ENCODE measurements at regions of chr2 and their contacts with region 1.

Region 1: GRCh38 chr2:176126929-176127773 is 2.4 kb upstream of the HOXD8 start:
- DNase-seq: peak; percentile 72 to 86 (median 76)
- H3K4me3 ChIP-seq: no peak overlapping the region
- H3K27ac ChIP-seq: no peak overlapping the region
- H3K4me1 ChIP-seq: peaks cover 3 to 25% (median 18%) of the 10 kb centered on the region in 4 experiments
- H3K27me3 ChIP-seq: peaks cover 22 to 99% (median 64%) of the 10 kb centered on the region in 5 experiments

Region 2: DNA sequence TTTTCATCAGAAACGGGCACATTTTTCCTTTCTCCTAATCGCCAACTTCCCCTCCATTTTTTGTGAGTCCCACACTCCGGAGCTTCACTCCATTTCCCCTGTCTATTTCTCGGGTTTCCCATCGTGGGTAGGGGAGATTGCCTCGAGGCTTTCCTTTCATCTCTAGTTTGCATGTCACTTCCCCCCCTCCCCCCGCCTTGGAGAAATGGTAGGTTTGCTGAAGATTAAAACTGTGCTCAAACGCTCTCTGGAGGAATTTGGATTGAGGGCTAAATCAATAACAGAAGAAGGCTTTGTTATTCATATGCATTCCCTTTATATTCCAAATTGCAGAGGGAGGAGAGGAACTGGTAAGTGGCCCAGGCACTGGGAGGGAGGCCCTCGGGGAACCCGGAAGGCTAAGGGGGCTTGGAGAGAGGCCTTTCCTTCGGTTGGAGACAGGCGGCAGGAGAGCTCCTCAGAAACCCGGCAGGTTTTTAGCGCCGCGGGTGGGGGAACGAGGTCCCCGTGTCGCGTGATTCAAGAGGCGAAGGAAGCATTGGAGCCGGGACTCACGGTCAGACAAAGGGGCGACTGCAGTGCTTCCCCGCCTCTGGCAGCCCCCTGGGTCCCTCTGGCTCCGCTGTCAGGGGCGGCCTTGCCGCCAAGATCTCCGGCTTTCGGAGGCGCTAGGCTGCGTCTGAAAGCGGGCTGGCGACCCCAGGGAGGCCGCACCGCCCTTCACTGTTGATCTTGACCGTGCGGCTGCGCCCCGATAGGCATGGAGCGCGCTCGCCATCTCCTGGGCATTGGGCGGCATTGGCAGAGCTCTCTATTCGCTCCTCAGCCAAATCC is 29.9 kb before region 1 on chr2:
- CTCF ChIA-PET with region 1: interaction called, 11 read pairs
- POLR2A ChIA-PET with region 1: no interaction called
- DNase-seq: peak; percentile 65 to 74 (median 71)
- H3K4me3 ChIP-seq: peak overlapping the region in 6 of 7 experiments; percentile 27 to 57 (median 52)
- H3K27ac ChIP-seq: no peak overlapping the region
- H3K4me1 ChIP-seq: peaks cover 7 to 23% (median 19%) of the 10 kb centered on the region in 4 experiments
- H3K27me3 ChIP-seq: peaks cover 34 to 99% (median 78%) of the 10 kb centered on the region in 5 experiments

Region 3: GRCh38 chr2:176110975-176111663 is 16.0 kb before region 1 on chr2:
- CTCF ChIA-PET with region 1: interaction called, 24 read pairs
- POLR2A ChIA-PET with region 1: no interaction called
- DNase-seq: peak; percentile 62 to 66 (median 65)
- H3K4me3 ChIP-seq: no peak overlapping the region
- H3K27ac ChIP-seq: no peak overlapping the region
- H3K4me1 ChIP-seq: peaks cover 0 to 10% (median 6%) of the 10 kb centered on the region in 4 experiments
- H3K27me3 ChIP-seq: peaks cover 29 to 99% (median 70%) of the 10 kb centered on the region in 5 experiments

Region 4: GRCh38 chr2:176638167-176639015 is 511.2 kb after region 1 on chr2:
- CTCF ChIA-PET with region 1: interaction called, 24 read pairs
- POLR2A ChIA-PET with region 1: no interaction called
- DNase-seq: peak; percentile 63 to 75 (median 75)
- H3K4me3 ChIP-seq: peak overlapping the region in 6 of 7 experiments; percentile 15 to 68 (median 58)
- H3K27ac ChIP-seq: no peak overlapping the region
- H3K4me1 ChIP-seq: peaks cover 0 to 12% (median 9%) of the 10 kb centered on the region in 4 experiments
- H3K27me3 ChIP-seq: peaks cover 38 to 92% (median 52%) of the 10 kb centered on the region in 5 experiments

Region 5: GRCh38 chr2:176643646-176644045 is 516.5 kb after region 1 on chr2:
- CTCF ChIA-PET with region 1: interaction called, 24 read pairs
- POLR2A ChIA-PET with region 1: no interaction called
- DNase-seq: no peak
- H3K4me3 ChIP-seq: no peak overlapping the region
- H3K27ac ChIP-seq: no peak overlapping the region
- H3K4me1 ChIP-seq: peaks cover 0 to 5% (median 2%) of the 10 kb centered on the region in 4 experiments
- H3K27me3 ChIP-seq: peaks cover 34 to 95% (median 58%) of the 10 kb centered on the region in 5 experiments

Region 6: GRCh38 chr2:176653479-176654443 is 526.6 kb after region 1 on chr2:
- CTCF ChIA-PET with region 1: interaction called, 44 read pairs
- POLR2A ChIA-PET with region 1: no interaction called
- DNase-seq: peak; percentile 58 to 74 (median 71)
- H3K4me3 ChIP-seq: no peak overlapping the region
- H3K27ac ChIP-seq: no peak overlapping the region
- H3K4me1 ChIP-seq: peaks cover 0 to 2% (median 0%) of the 10 kb centered on the region in 4 experiments
- H3K27me3 ChIP-seq: peaks cover 7 to 58% (median 22%) of the 10 kb centered on the region in 5 experiments

Region 7: DNA sequence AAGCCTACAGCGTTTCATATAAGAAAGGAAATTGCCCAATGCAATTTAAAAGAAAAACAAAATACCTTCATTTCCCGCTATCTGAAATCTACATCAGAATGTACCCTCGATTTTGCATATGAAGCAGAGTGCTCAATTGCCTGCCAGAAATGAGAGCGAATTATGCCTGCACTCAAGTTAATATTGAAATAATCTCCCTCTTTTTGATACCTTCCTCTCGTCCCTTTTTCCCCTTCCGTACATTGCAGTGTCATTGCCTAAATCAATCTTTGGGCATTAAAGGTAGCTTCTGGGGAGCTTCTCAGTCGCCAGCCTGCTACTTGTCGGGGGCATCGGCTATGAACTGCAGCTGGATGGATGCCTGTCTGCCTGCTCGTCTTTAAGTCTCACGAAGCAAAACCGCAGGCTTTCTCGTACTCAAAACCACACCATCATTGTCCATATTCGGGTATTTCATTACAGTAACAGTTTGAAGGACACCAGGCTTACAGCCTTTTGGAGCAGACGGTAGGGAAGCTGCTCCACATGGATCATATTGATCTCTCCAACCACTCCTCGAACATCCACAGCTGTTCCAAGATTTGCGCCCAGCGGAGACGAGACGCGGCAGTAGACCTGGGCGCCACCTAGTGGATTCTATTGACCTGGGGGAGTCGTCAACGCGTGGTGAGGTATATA is 1021.5 kb after region 1 on chr2:
- CTCF ChIA-PET with region 1: interaction called, 32 read pairs
- POLR2A ChIA-PET with region 1: no interaction called
- DNase-seq: peak; percentile 73 to 88 (median 80)
- H3K4me3 ChIP-seq: peak overlapping the region in 6 of 7 experiments; percentile 63 to 76 (median 66)
- H3K27ac ChIP-seq: no peak overlapping the region
- H3K4me1 ChIP-seq: peaks cover under 1 to 13% (median 9%) of the 10 kb centered on the region in 4 experiments
- H3K27me3 ChIP-seq: peaks cover 0 to 25% (median 9%) of the 10 kb centered on the region in 5 experiments

Measured in common myeloid progenitor, CD34-positive (primary cell).